Motor neuron (in vitro differentiated cells): ENCODE measurements at regions of chr4 and their contacts with region 1.

Region 1: DNA sequence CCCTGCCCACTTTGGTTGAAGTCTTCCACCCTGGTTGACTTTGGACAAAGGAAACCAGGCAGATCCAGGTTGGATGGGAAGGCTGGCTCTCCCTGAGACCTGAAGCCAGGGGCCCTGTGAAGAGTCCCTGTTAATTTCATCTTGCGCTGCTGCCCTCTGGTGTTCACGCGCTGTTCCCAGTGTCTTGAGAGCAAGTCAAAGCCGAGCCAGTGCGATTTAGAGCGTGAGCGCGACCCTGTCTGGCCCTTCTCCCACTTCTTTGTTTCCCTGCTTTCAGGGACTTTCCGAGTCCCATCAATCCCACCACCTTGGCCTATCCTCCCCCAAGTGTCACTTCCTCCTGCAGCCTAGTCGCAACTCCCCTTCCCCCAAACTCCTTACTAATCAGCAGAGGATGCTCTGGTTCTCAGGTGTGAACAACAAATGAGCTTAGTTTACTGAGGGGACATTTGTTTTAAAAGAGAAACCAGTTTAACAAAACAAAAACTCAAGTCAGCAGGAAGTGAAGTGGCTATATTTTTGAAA is 25.8 kb upstream of the CHRNA9 start:
- ATAC-seq: peak; percentile 93 to 99 (median 98)
- H3K4me3 ChIP-seq: no peak overlapping the region
- H3K27ac ChIP-seq: no peak overlapping the region
- H3K4me1 ChIP-seq: peaks cover 9 to 20% of the 10 kb centered on the region in 2 donors

Region 2: DNA sequence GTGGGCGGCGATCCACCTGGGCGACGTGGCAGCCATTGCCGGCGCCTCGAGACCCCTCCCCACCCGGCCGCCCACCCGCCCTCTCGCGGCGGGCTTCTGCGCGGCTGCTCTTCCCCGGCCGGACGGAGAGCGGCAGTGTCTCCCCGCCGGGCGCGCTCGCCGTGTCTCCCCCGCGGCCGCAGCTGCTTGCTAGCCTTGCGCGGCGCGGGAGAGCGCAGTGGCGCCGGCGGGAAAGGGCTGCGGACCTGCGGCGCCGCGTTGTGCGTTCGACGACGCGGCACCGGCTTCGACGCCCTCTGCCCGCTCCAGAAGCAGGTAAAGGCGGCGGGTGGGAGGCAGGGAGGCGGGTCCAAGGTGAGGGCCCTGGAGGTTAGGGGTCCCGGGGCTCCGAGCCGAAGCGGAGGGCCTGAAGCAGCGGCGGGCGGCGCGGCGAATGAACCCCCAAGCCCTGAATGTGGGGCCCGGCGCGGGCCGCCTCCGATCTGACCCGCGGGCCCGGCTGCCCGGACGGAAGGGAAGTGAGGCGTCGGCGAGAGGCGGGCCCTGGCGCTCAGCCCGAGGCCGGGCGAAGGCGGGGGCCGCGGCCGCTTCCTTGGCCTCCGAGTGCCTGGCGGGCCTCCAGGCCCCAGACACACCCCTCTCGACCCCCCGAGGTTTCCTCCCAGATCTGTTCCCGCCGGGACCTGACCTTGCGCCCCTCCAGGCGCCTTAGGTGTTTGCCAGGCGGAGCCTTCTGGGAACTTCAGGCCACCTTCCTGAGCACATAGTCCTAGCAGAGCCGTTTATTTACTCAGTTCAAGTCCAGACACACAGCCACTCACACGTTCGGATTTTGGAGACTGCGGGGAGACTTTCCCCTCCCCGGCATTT is 252.4 kb before region 1 on chr4 and contains the start of gene N4BP2:
- in situ Hi-C with region 1: loop called in 5 of 9 experiments (anchors 25 kb)
- ATAC-seq: peak; percentile 57 to 87 (median 80)
- H3K4me3 ChIP-seq: peak within 1 kb of the TSS; percentile 63 to 77 (median 74)
- H3K27ac ChIP-seq: peak within 1 kb of the TSS; percentile 97 to 99
- H3K4me1 ChIP-seq: peaks cover 11 to 13% of the 10 kb centered on the region in 2 donors
- total RNA-seq, gene N4BP2: 7.4 to 38.0 (median 27.3) TPM

Region 3: GRCh38 chr4:40149960-40150385 is 159.3 kb before region 1 on chr4:
- in situ Hi-C with region 1: loop called in 1 of 9 experiments (anchors 25 kb)
- ATAC-seq: peak in 3 of 8 experiments; percentile 79 to 84 (median 83)
- H3K4me3 ChIP-seq: no peak overlapping the region
- H3K27ac ChIP-seq: no peak overlapping the region
- H3K4me1 ChIP-seq: no peaks in the 10 kb centered on the region